Transverse colon (tissue), 4 donors: ENCODE measurements at regions of chr1 and their contacts with region 1.

Region 1: GRCh38 chr1:20151906-20152598 is 12.9 kb downstream of the PLA2G2F start:
- DNase-seq: peak; percentile 86
- H3K4me3 ChIP-seq: peak overlapping the region; percentile 10 to 46 (median 28)
- H3K27ac ChIP-seq: peak overlapping the region in 3 of 4 donors; percentile 19 to 59 (median 40)
- H3K4me1 ChIP-seq: peaks cover 0 to 18% (median 12%) of the 10 kb centered on the region in 4 donors
- H3K27me3 ChIP-seq: no peaks in the 10 kb centered on the region
- CTCF ChIP-seq: peak; percentile 91 to 97 (median 94)
- EP300 ChIP-seq: no peak
- POLR2A ChIP-seq: no peak

Region 2: GRCh38 chr1:19918057-19918456 is 234.0 kb before region 1 on chr1:
- in situ Hi-C with region 1: loop called (anchors 5 to 25 kb)
- intact Hi-C with region 1: loop called (anchors 5 kb)
- DNase-seq: peak; percentile 86
- H3K4me3 ChIP-seq: no peak overlapping the region
- H3K27ac ChIP-seq: no peak overlapping the region
- H3K4me1 ChIP-seq: peaks cover 0 to 8% (median 0%) of the 10 kb centered on the region in 4 donors
- H3K27me3 ChIP-seq: no peaks in the 10 kb centered on the region
- CTCF ChIP-seq: peak; percentile 85 to 91 (median 89)
- EP300 ChIP-seq: no peak
- POLR2A ChIP-seq: no peak

Region 3: DNA sequence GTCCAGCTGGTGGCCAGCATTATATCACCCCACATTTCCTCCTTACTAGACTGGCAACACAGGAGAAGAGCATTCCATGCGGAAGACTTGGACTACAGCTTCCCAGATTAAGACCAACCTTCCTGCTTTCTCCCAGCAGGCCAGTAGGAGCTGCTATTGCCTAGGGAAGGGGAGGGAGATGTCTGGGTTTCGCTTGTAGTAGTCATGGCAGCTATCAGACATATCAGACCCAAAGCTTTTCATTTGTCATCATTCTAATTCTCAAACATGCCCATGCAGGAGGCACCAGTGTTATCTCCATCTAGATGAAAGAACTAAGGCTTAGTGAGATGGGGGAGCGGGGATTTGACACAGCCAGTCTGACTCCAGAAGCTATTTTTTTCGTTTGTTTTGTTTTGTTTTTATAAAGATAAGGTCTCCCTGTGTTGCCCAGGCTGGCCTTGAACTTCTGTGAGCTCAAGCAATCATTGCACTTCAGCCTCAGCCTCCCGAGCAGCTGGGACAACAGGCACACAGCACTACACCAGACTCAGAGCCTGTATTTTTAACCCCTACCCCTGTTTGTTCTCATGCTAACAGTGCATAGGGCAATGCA is 177.1 kb before region 1 on chr1:
- in situ Hi-C with region 1: no loop called
- intact Hi-C with region 1: loop called (anchors 2 kb)
- DNase-seq: peak; percentile 61
- H3K4me3 ChIP-seq: no peak overlapping the region
- H3K27ac ChIP-seq: no peak overlapping the region
- H3K4me1 ChIP-seq: peaks cover 7 to 38% (median 11%) of the 10 kb centered on the region in 4 donors
- H3K27me3 ChIP-seq: no peaks in the 10 kb centered on the region
- CTCF ChIP-seq: peak; percentile 72 to 92 (median 80)
- EP300 ChIP-seq: no peak
- POLR2A ChIP-seq: no peak

Region 4: GRCh38 chr1:20017741-20018140 is 134.3 kb before region 1 on chr1:
- in situ Hi-C with region 1: no loop called
- intact Hi-C with region 1: no loop called
- DNase-seq: no peak
- H3K4me3 ChIP-seq: no peak overlapping the region
- H3K27ac ChIP-seq: no peak overlapping the region
- H3K4me1 ChIP-seq: no peaks in the 10 kb centered on the region
- H3K27me3 ChIP-seq: no peaks in the 10 kb centered on the region
- CTCF ChIP-seq: no peak
- EP300 ChIP-seq: no peak
- POLR2A ChIP-seq: no peak